Cardiac septum (tissue), 1 donor: ENCODE measurements at regions of chr20 and their contacts with region 1.

Region 1: GRCh38 chr20:13274275-13274861 is 53.3 kb downstream of the ISM1 start:
- DNase-seq: no peak

Region 2: GRCh38 chr20:13221673-13222318 is 52.6 kb before region 1 on chr20:
- intact Hi-C with region 1: loop called (anchors 2 kb)
- DNase-seq: no peak

Region 3: DNA sequence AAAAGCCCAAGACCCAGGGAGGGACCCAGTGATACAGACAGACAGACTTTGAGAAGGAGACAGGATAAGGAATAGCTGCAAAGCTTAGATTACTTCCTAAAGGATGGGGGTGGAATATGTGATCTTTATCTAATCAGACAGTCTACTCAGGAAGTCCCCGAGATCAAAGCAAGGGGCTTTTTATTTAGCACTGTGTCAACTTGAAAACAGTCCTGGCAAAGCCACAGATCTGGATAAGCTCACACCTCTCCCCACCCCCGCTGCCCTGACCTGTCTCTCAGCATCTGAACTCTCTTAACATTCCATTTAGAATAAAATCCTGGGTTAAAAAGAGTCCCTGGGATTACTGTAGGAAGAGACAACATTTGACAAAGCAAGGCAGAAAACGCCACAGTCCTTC is 48.3 kb after region 1 on chr20:
- intact Hi-C with region 1: loop called (anchors 5 kb)
- DNase-seq: no peak

Region 4: GRCh38 chr20:13533946-13534345 is 259.6 kb after region 1 on chr20:
- intact Hi-C with region 1: no loop called
- DNase-seq: no peak